ENCODE measurements at regions of chr7 and their contacts with region 1.

Region 1: GRCh38 chr7:48424731-48425130 is 253.5 kb downstream of the ABCA13 start:
- DNase-seq: peak; percentile 53
- H3K4me3 Mint-ChIP-seq: no peak overlapping the region
- H3K27ac Mint-ChIP-seq: no peak overlapping the region
- H3K4me1 Mint-ChIP-seq: peaks cover 39% of the 10 kb centered on the region
- H3K27me3 Mint-ChIP-seq: no peaks in the 10 kb centered on the region
- CTCF ChIP-seq: peak; percentile 80

Region 2: GRCh38 chr7:48280100-48280499 is 144.6 kb before region 1 on chr7:
- CTCF ChIA-PET with region 1: no interaction called
- POLR2A ChIA-PET with region 1: no interaction called
- intact Hi-C with region 1: no loop called
- DNase-seq: peak; percentile 35
- H3K4me3 Mint-ChIP-seq: no peak overlapping the region
- H3K27ac Mint-ChIP-seq: no peak overlapping the region
- H3K4me1 Mint-ChIP-seq: peaks cover 15% of the 10 kb centered on the region
- H3K27me3 Mint-ChIP-seq: no peaks in the 10 kb centered on the region
- CTCF ChIP-seq: no peak

Region 3: DNA sequence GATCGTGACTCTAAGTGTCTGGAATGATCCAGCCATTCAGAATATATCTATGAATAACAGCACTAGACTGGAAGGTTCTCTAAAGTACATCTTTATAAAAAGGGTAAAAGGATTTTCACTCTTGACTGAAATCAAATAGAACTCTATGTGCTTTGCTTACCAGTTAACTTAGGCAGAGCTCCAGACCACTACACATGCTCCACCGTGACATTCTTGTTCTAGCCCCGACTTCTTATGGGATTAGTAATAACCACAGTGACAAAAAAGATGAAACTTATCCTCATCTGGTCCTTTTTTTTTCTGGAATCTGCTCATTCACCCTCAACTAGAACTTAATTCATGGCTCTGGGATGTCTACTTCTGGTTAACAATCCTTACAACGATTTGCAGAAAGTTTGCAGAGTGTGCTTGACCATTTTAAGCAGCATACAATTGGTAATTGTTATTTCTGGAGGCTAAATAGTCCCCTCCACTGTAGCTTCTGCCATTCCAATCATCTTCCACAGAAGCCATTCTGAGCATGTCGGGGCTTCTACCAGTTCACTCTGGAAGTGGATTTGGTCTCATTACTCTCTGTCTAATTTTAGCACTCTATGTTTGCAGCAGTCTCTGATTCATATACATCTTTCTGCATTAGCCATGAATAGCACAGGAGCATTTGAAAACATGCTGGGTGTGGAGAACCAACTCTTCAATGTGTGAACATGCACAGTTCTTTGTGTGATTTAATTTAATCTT is 336.0 kb after region 1 on chr7:
- CTCF ChIA-PET with region 1: no interaction called
- POLR2A ChIA-PET with region 1: no interaction called
- intact Hi-C with region 1: loop called (anchors 10 kb)
- DNase-seq: no peak
- H3K4me3 Mint-ChIP-seq: no peak overlapping the region
- H3K27ac Mint-ChIP-seq: no peak overlapping the region
- H3K4me1 Mint-ChIP-seq: peaks cover 1% of the 10 kb centered on the region
- H3K27me3 Mint-ChIP-seq: peaks cover 68% of the 10 kb centered on the region
- CTCF ChIP-seq: no peak

Region 4: GRCh38 chr7:48875045-48875916 is 450.6 kb after region 1 on chr7:
- CTCF ChIA-PET with region 1: interaction called, 16 read pairs
- POLR2A ChIA-PET with region 1: no interaction called
- intact Hi-C with region 1: loop called (anchors 1 kb)
- DNase-seq: peak; percentile 43
- H3K4me3 Mint-ChIP-seq: no peak overlapping the region
- H3K27ac Mint-ChIP-seq: no peak overlapping the region
- H3K4me1 Mint-ChIP-seq: no peaks in the 10 kb centered on the region
- H3K27me3 Mint-ChIP-seq: peaks cover 49% of the 10 kb centered on the region
- CTCF ChIP-seq: peak; percentile 79

Region 5: GRCh38 chr7:49001610-49002033 is 576.9 kb after region 1 on chr7:
- CTCF ChIA-PET with region 1: no interaction called
- POLR2A ChIA-PET with region 1: no interaction called
- intact Hi-C with region 1: loop called (anchors 10 kb)
- DNase-seq: peak; percentile 64
- H3K4me3 Mint-ChIP-seq: no peak overlapping the region
- H3K27ac Mint-ChIP-seq: no peak overlapping the region
- H3K4me1 Mint-ChIP-seq: no peaks in the 10 kb centered on the region
- H3K27me3 Mint-ChIP-seq: peaks cover 31% of the 10 kb centered on the region
- CTCF ChIP-seq: peak; percentile 56

Region 6: DNA sequence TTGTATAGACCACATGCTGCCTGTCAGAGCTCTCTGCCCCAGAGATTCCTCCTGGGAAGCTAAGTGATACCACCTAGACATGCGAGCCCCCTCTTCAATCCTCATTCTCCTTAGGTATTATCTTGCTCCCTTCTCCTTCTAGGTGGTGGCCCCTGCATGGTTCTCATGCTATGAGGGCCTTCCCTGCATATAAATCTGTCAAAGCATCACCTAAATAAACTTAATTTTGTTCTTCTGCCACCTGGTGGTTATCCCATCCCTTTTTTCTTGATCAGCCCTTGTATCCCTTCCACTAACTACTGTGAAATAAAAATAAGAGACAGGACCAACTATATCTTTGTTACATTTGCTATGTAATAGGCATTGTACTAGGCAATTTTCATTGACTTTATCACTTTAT is 741.7 kb after region 1 on chr7:
- CTCF ChIA-PET with region 1: no interaction called
- POLR2A ChIA-PET with region 1: no interaction called
- intact Hi-C with region 1: loop called (anchors 1 kb)
- DNase-seq: peak; percentile 25
- H3K4me3 Mint-ChIP-seq: no peak overlapping the region
- H3K27ac Mint-ChIP-seq: no peak overlapping the region
- H3K4me1 Mint-ChIP-seq: no peaks in the 10 kb centered on the region
- H3K27me3 Mint-ChIP-seq: peaks cover 72% of the 10 kb centered on the region
- CTCF ChIP-seq: peak; percentile 12